ENCODE measurements at regions of chr20 and their contacts with region 1.

Region 1: GRCh38 chr20:24690408-24690807 is 221.0 kb downstream of the SYNDIG1 start:
- DNase-seq: no peak
- ATAC-seq: no peak
- H3K4me3 ChIP-seq: no peak overlapping the region
- H3K27ac ChIP-seq: no peak overlapping the region
- H3K4me1 ChIP-seq: no peaks in the 10 kb centered on the region
- H3K27me3 ChIP-seq: peaks cover 16% of the 10 kb centered on the region
- CTCF ChIP-seq: no peak
- POLR2A ChIP-seq: no peak
- RAD21 ChIP-seq: no peak

Region 2: DNA sequence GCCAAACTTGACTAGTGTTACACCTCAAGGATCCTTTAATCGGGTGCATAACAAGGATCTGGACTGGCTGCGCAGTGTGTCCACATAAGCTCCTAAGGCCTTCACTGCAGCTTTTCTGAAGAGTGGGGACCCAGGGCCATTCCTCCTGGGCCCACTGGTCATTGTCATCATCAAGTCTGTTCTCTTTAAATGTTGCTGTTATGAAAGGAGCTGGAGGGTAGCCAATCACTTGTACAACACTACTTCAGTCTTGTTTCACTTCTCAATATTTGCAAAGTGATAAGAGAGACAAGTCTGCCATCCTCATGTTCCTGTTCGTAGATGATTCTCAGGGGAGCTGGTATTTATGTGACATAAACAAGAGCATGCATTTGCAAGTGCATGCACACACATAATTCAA is 71.2 kb before region 1 on chr20:
- CTCF ChIA-PET with region 1: no interaction called
- POLR2A ChIA-PET with region 1: no interaction called
- RAD21 ChIA-PET with region 1: no interaction called
- intact Hi-C with region 1: no loop called
- DNase-seq: no peak
- ATAC-seq: no peak
- H3K4me3 ChIP-seq: no peak overlapping the region
- H3K27ac ChIP-seq: no peak overlapping the region
- H3K4me1 ChIP-seq: no peaks in the 10 kb centered on the region
- H3K27me3 ChIP-seq: peaks cover 60% of the 10 kb centered on the region
- CTCF ChIP-seq: no peak
- POLR2A ChIP-seq: no peak
- RAD21 ChIP-seq: no peak

Region 3: GRCh38 chr20:24718696-24719095 is 28.3 kb after region 1 on chr20:
- CTCF ChIA-PET with region 1: no interaction called
- POLR2A ChIA-PET with region 1: no interaction called
- RAD21 ChIA-PET with region 1: no interaction called
- intact Hi-C with region 1: loop called (anchors 1 kb)
- DNase-seq: no peak
- ATAC-seq: no peak
- H3K4me3 ChIP-seq: no peak overlapping the region
- H3K27ac ChIP-seq: no peak overlapping the region
- H3K4me1 ChIP-seq: no peaks in the 10 kb centered on the region
- H3K27me3 ChIP-seq: peaks cover 53% of the 10 kb centered on the region
- CTCF ChIP-seq: no peak
- POLR2A ChIP-seq: no peak
- RAD21 ChIP-seq: no peak